IMR-90 (cell line): ENCODE measurements at regions of chr4 and their contacts with region 1.

Region 1: DNA sequence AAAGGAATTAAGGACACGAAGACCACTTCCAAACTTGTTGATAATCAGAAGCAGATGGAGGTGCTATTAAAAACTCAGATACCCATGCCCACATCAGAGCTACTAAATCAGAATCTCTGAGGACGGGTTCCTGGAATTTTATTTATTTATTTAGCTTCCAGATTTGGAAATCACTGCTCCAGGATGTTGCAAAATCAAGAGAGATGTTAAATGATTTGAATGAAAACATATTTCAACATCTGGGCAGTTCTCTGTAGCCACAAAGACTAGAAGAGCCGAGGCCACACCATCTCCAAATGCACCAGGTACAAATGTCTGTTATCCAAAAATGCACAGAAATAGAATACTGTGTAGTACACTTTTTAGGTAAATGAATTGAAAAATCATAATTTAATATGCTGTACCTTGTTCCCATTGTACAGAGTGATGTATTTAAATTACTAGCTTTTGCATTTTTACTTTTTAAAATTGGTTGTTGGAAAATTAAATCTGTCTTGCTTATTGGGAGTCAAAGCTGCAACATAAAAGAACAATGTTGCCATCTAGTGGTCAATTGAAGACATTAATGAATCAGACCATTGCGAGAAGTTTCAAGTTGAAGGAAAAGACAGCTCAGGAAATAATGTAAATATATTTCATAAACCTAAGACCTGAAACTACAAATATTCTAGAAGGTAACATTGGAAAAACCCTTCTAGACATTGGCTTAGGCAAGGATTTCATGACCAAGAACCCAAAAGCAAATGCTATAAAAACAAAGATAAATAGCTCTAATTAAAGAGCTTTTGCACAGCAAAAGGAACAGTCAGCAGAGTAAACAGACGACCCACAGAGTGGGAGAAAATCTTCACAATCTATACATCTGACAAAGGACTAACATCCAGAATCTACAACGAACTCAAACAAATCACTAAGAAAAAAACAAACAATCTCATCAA is 151.3 kb upstream of the TTC29 start:
- DNase-seq: peak; percentile 69
- ATAC-seq: peak; percentile 79
- H3K4me3 ChIP-seq: no peak overlapping the region
- H3K27ac ChIP-seq: no peak overlapping the region
- H3K4me1 ChIP-seq: peaks cover 5% of the 10 kb centered on the region
- H3K27me3 ChIP-seq: no peaks in the 10 kb centered on the region
- CTCF ChIP-seq: peak; percentile 74
- POLR2A ChIP-seq: no peak
- RAD21 ChIP-seq: peak; percentile 75

Region 2: GRCh38 chr4:146182450-146182849 is 914.5 kb before region 1 on chr4:
- CTCF ChIA-PET with region 1: no interaction called
- POLR2A ChIA-PET with region 1: no interaction called
- dilution Hi-C with region 1: no loop called
- in situ Hi-C with region 1: no loop called
- intact Hi-C with region 1: no loop called
- DNase-seq: no peak
- ATAC-seq: no peak
- H3K4me3 ChIP-seq: no peak overlapping the region
- H3K27ac ChIP-seq: no peak overlapping the region
- H3K4me1 ChIP-seq: peaks cover 3% of the 10 kb centered on the region; the same call in 1 of the 2 replicates
- H3K27me3 ChIP-seq: no peaks in the 10 kb centered on the region
- CTCF ChIP-seq: no peak
- POLR2A ChIP-seq: no peak
- RAD21 ChIP-seq: no peak

Region 3: GRCh38 chr4:146333187-146333894 is 763.6 kb before region 1 on chr4:
- CTCF ChIA-PET with region 1: no interaction called
- POLR2A ChIA-PET with region 1: no interaction called
- dilution Hi-C with region 1: no loop called
- in situ Hi-C with region 1: loop called (anchors 10 kb)
- intact Hi-C with region 1: no loop called
- DNase-seq: peak; percentile 68
- ATAC-seq: peak; percentile 33; the same call in 1 of the 2 replicates
- H3K4me3 ChIP-seq: peak overlapping the region; percentile 33; the same call in 1 of the 2 replicates
- H3K27ac ChIP-seq: no peak overlapping the region
- H3K4me1 ChIP-seq: peaks cover 7% of the 10 kb centered on the region
- H3K27me3 ChIP-seq: no peaks in the 10 kb centered on the region
- CTCF ChIP-seq: no peak
- POLR2A ChIP-seq: no peak
- RAD21 ChIP-seq: no peak

Region 4: GRCh38 chr4:146638801-146639605 is 457.9 kb before region 1 on chr4 and contains the start of gene POU4F2:
- CTCF ChIA-PET with region 1: no interaction called
- POLR2A ChIA-PET with region 1: no interaction called
- dilution Hi-C with region 1: no loop called
- in situ Hi-C with region 1: no loop called
- intact Hi-C with region 1: loop called (anchors 5 kb)
- DNase-seq: no peak
- ATAC-seq: peak; percentile 62
- H3K4me3 ChIP-seq: no peak within 1 kb of the TSS; the same call in 1 of the 2 replicates
- H3K27ac ChIP-seq: no peak within 1 kb of the TSS
- H3K4me1 ChIP-seq: no peaks in the 10 kb centered on the region
- H3K27me3 ChIP-seq: peaks cover 45% of the 10 kb centered on the region
- CTCF ChIP-seq: no peak
- POLR2A ChIP-seq: no peak
- RAD21 ChIP-seq: no peak
- total RNA-seq, gene POU4F2: not detected in 2 replicates

Region 5: GRCh38 chr4:147019061-147019460 is 77.9 kb before region 1 on chr4:
- CTCF ChIA-PET with region 1: interaction called, 61 read pairs
- POLR2A ChIA-PET with region 1: no interaction called
- dilution Hi-C with region 1: no loop called
- in situ Hi-C with region 1: loop called (anchors 5 kb)
- intact Hi-C with region 1: loop called (anchors 1 kb)
- DNase-seq: peak; percentile 56
- ATAC-seq: peak; percentile 89
- H3K4me3 ChIP-seq: no peak overlapping the region
- H3K27ac ChIP-seq: no peak overlapping the region
- H3K4me1 ChIP-seq: no peaks in the 10 kb centered on the region
- H3K27me3 ChIP-seq: peaks cover 8% of the 10 kb centered on the region
- CTCF ChIP-seq: peak; percentile 72
- POLR2A ChIP-seq: no peak
- RAD21 ChIP-seq: peak; percentile 88